ENCODE measurements at regions of chr1 and their contacts with region 1.

Region 1: DNA sequence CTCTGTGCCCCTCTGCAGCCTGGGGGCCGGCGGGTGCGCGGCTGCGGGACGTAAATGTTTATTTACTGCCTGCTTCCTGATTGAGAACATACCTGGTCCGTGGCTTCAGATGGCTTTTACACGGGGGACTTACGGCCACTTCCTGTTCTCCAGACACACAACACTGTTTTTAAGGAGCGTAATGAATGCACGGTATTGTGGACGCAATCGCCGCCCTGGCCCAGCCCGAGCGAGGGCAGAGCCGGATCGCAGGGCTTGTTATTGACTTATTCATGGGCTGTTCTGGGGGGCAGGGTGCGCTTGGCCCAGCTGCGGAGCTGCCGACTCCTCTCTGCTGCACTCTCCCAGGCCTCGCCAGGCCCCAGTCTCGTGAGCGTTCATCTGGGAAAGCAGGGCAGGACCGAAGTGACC is 52.8 kb upstream of the ACTRT2 start:
- DNase-seq: no peak
- H3K4me3 ChIP-seq: no peak overlapping the region
- CTCF ChIP-seq: no peak

Region 2: DNA sequence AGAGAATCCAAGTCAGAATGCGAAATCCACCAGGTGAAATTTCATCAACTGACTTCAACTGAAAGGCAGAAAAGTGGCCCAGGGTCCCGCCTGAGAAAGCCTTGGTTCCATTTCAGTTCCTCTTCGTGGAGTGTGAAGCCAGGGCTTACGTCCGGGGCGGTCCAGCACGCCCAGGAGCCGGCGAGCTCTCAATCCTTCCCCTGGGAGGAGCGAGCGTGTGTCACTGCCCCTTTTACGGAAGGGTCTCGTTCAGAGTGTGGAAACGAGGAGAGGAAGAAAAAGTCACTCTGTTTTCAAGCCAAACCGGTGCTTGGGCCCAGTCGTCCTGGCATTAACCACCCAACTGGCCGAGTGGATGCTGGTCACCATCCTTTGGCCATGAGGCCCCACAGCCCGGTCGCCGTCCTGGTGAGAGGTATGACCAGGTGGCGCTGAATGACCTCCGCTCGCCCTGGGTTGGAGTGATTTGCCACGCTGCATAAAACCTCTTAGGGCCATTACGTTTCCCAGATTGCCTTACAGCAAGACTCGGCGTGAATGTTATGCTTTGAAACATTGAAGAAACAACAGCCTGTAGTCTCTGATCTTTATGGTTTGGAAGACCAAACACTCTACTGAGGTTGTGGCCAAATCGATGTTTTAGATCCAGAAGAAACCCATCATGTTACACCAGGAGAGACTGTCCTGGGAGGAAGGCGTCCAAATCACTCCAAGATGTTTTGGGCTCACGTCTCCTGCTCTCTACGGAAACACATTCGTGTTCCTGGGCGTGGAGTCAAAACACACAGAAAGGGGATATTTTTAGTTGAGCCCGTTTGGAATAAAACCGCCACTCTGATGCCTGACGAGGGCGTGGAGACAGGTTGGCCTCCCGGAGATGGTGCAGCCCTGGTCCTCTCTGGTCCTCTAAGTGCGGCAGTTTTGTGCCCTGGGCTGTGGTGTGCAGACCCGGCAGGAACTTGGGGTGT is 40.8 kb before region 1 on chr1:
- in situ Hi-C with region 1: loop called (anchors 5 kb)
- DNase-seq: no peak
- H3K4me3 ChIP-seq: no peak overlapping the region
- CTCF ChIP-seq: no peak

Region 3: DNA sequence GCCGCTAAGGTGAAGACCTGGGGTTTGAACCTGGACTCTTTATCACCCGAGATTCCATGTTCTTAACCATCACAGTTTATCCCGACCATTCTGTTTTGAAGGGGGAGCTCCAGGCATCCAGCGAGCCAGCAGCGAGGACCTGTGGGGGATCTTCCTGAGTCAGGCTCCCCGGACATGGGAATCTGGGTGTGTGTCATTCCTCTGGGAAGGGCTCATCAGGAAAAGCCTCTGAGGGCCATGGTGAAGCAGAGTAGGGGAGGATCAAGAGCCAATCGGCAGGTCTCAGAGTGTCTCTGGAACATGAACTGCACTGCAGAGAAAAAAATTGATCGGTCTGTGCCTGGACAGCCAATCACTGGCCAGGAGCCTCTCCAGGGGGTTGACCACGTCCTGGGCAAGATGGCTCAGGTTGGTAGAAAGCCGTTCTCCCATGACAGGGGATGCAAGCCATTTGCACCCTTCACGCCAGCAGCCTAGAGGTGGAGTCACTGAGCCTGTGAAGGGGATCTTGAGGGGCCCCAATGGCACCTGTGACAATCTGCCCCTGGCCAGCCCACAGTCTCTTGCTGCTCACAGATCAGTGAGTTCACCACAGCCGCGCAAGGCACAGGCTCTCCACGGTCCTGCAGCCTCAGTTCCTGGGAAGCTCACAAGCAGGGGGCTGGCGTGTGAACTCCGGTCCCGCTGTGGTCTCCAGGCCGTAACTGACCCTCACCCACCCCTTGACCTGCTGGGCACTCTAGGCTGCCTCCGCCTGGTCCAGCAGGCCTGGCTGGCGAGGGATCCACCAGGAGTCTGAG is 32.4 kb after region 1 on chr1:
- in situ Hi-C with region 1: no loop called
- DNase-seq: no peak
- H3K4me3 ChIP-seq: no peak overlapping the region
- CTCF ChIP-seq: no peak

Measured in astrocyte of the cerebellum (primary cell).